ENCODE measurements at regions of chr11 and their contacts with region 1.

Region 1: GRCh38 chr11:102317099-102317767 is at the start of gene BIRC3:
- DNase-seq: peak; percentile 77 to 98 (median 93)
- ATAC-seq: peak; percentile 94
- H3K4me3 ChIP-seq: peak within 1 kb of the TSS; percentile 74
- H3K4me3 Mint-ChIP-seq: peak within 1 kb of the TSS; percentile 85 to 98 (median 96)
- H3K27ac ChIP-seq: peak within 1 kb of the TSS; percentile 97
- H3K27ac Mint-ChIP-seq: peak within 1 kb of the TSS; percentile 93 to 99 (median 98)
- H3K4me1 ChIP-seq: peaks cover 43 to 58% of the 10 kb centered on the region in 2 donors
- H3K4me1 Mint-ChIP-seq: peaks cover 44 to 87% (median 74%) of the 10 kb centered on the region in 7 donors
- H3K27me3 ChIP-seq: no peaks in the 10 kb centered on the region
- H3K27me3 Mint-ChIP-seq: peaks cover 0 to 2% (median 0%) of the 10 kb centered on the region in 5 donors
- total RNA-seq, gene BIRC3: 62.3 to 160 (median 128) TPM

Region 2: GRCh38 chr11:102293873-102294601 is 23.2 kb before region 1 on chr11:
- CTCF ChIA-PET with region 1: interaction called, 354 read pairs
- POLR2A ChIA-PET with region 1: interaction called, 158 read pairs
- intact Hi-C with region 1: loop called (anchors 1 kb)
- DNase-seq: peak in 7 of 9 donors; percentile 50 to 75 (median 66)
- ATAC-seq: peak; percentile 98
- H3K4me3 ChIP-seq: peak overlapping the region; percentile 49
- H3K4me3 Mint-ChIP-seq: peak overlapping the region; percentile 62 to 97 (median 82)
- H3K27ac ChIP-seq: peak overlapping the region; percentile 49
- H3K27ac Mint-ChIP-seq: peak overlapping the region; percentile 77 to 95 (median 91)
- H3K4me1 ChIP-seq: peaks cover 7 to 9% of the 10 kb centered on the region in 2 donors
- H3K4me1 Mint-ChIP-seq: peaks cover 10 to 44% (median 40%) of the 10 kb centered on the region in 7 donors
- H3K27me3 ChIP-seq: no peaks in the 10 kb centered on the region
- H3K27me3 Mint-ChIP-seq: no peaks in the 10 kb centered on the region

Region 3: DNA sequence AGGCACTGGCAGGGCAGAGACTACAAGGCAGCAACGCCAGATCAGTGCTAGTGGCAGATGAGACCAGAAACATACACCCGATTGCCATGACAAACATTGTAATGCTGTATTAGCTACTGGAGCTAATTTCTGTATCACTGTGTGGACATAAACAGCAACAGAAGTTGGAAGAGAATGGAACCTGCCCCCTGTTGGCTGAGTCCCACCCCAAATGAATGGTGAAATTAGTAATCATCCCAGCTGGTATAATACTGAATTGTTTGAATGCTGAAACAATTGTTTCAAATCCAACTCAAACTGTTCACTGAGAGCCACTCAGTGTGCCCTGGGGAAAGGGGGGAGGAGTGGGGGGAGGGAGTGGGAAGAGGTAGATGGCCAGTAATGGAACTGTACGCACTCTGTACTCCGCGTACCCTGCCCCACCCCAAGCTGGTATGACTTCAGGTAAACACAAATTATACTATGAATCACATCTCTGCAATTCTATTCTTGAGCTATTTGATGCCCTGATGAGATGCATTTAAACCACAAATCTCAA is 11.1 kb before region 1 on chr11:
- CTCF ChIA-PET with region 1: interaction called, 354 read pairs
- POLR2A ChIA-PET with region 1: interaction called, 89 read pairs
- intact Hi-C with region 1: loop called (anchors 1 kb)
- DNase-seq: peak in 1 of 9 donors; percentile 30
- ATAC-seq: peak; percentile 23
- H3K4me3 ChIP-seq: peak overlapping the region; percentile 14
- H3K4me3 Mint-ChIP-seq: peak overlapping the region; percentile 46 to 84 (median 64)
- H3K27ac ChIP-seq: peak overlapping the region; percentile 68
- H3K27ac Mint-ChIP-seq: peak overlapping the region; percentile 87 to 96 (median 93)
- H3K4me1 ChIP-seq: peaks cover 49 to 76% of the 10 kb centered on the region in 2 donors
- H3K4me1 Mint-ChIP-seq: peaks cover 41 to 80% (median 67%) of the 10 kb centered on the region in 7 donors
- H3K27me3 ChIP-seq: no peaks in the 10 kb centered on the region
- H3K27me3 Mint-ChIP-seq: no peaks in the 10 kb centered on the region

Region 4: GRCh38 chr11:102560555-102561011 is 243.3 kb after region 1 on chr11:
- CTCF ChIA-PET with region 1: no interaction called
- POLR2A ChIA-PET with region 1: no interaction called
- intact Hi-C with region 1: loop called in 1 of 2 experiments (anchors 5 kb)
- DNase-seq: peak in 6 of 9 donors; percentile 2 to 34 (median 12)
- ATAC-seq: peak; percentile 54
- H3K4me3 ChIP-seq: peak overlapping the region; percentile 34
- H3K4me3 Mint-ChIP-seq: peak overlapping the region; percentile 42 to 81 (median 78)
- H3K27ac ChIP-seq: peak overlapping the region; percentile 63
- H3K27ac Mint-ChIP-seq: peak overlapping the region; percentile 70 to 96 (median 88)
- H3K4me1 ChIP-seq: peaks cover 21 to 28% of the 10 kb centered on the region in 2 donors
- H3K4me1 Mint-ChIP-seq: peaks cover 27 to 50% (median 45%) of the 10 kb centered on the region in 7 donors
- H3K27me3 ChIP-seq: no peaks in the 10 kb centered on the region
- H3K27me3 Mint-ChIP-seq: peaks cover 0 to 2% (median 0%) of the 10 kb centered on the region in 5 donors

Measured in naive thymus-derived CD4-positive, alpha-beta T cell (primary cell).